Mammary epithelial cell (primary cell): ENCODE measurements at regions of chr2 and their contacts with region 1.

Region 1: GRCh38 chr2:216877084-216877483 is 17.2 kb upstream of the TNP1 start:
- DNase-seq: no peak
- H3K4me3 ChIP-seq: no peak overlapping the region
- H3K27ac ChIP-seq: no peak overlapping the region
- H3K4me1 ChIP-seq: no peaks in the 10 kb centered on the region
- H3K27me3 ChIP-seq: no peaks in the 10 kb centered on the region
- CTCF ChIP-seq: peak; percentile 37 to 55

Region 2: DNA sequence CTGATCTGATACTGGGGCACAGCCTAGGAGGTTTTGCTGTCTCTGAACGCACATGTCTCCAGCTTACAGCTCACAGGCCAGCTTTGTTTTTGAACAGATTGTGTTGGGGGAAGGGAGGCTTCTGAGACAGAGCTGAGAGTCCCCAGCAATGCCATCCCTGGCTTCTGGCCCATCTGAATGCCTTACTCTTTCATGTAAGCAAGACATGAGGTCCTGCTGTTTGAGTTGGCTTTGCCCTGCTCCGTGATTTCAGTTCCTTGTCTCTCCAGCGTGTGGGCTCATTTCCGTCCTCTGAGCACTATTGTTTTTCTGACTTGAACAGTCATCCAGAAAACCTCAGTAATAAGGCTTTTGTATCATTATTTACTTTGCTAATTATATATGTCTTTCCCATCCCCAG is 177.7 kb after region 1 on chr2:
- CTCF ChIA-PET with region 1: no interaction called
- dilution Hi-C with region 1: no loop called
- in situ Hi-C with region 1: no loop called
- intact Hi-C with region 1: loop called (anchors 5 kb)
- DNase-seq: no peak
- H3K4me3 ChIP-seq: no peak overlapping the region
- H3K27ac ChIP-seq: no peak overlapping the region
- H3K4me1 ChIP-seq: no peaks in the 10 kb centered on the region
- H3K27me3 ChIP-seq: no peaks in the 10 kb centered on the region
- CTCF ChIP-seq: no peak

Region 3: GRCh38 chr2:217142649-217143266 is 265.7 kb after region 1 on chr2:
- CTCF ChIA-PET with region 1: no interaction called
- dilution Hi-C with region 1: no loop called
- in situ Hi-C with region 1: no loop called
- intact Hi-C with region 1: loop called (anchors 1 kb)
- DNase-seq: peak; percentile 17
- H3K4me3 ChIP-seq: no peak overlapping the region
- H3K27ac ChIP-seq: no peak overlapping the region
- H3K4me1 ChIP-seq: no peaks in the 10 kb centered on the region
- H3K27me3 ChIP-seq: no peaks in the 10 kb centered on the region
- CTCF ChIP-seq: peak; percentile 78 to 81

Region 4: DNA sequence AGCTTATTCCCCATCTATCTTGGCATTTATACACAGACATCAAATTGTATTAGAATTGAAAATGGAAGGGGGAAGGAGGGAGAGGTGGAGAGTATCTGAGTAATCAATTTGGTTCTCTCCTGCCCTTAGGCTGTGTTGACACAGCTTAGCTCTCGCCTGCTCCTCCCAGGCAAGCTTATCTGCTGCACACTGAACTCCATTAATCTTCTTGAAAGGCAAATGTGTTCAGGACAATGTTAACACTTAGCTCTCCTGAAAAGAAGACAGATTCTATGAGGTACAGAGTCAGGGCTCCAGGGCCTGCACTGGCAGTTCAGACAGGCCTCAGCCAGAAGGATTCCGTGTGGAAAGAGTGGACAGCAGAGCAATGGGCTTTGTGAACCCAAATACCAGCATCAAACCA is 412.8 kb after region 1 on chr2:
- CTCF ChIA-PET with region 1: no interaction called
- dilution Hi-C with region 1: loop called (anchors 10 kb)
- in situ Hi-C with region 1: no loop called
- intact Hi-C with region 1: no loop called
- DNase-seq: peak; percentile 70
- H3K4me3 ChIP-seq: no peak overlapping the region
- H3K27ac ChIP-seq: no peak overlapping the region
- H3K4me1 ChIP-seq: peaks cover 11% of the 10 kb centered on the region
- H3K27me3 ChIP-seq: no peaks in the 10 kb centered on the region
- CTCF ChIP-seq: no peak

Region 5: DNA sequence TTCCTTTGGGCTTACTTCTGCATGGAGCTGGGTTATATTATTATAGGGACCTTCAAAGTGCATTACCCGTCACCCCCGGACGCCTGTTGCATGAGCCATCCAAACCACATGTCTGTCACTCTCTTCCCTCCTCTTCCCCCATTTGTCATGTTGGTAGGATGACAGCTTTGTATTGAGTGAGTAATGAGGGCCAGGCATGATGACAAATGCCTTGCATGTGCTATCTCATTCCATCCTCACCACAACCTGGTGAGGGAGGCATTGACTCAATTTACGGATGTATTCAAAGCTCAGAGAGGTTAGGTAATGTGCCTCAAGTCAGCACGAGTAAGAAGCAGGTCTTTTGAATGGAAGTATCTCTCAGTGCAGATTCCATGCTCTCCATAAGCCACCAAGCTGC is 493.3 kb after region 1 on chr2:
- CTCF ChIA-PET with region 1: no interaction called
- dilution Hi-C with region 1: no loop called
- in situ Hi-C with region 1: no loop called
- intact Hi-C with region 1: loop called (anchors 10 kb)
- DNase-seq: peak; percentile 96
- H3K4me3 ChIP-seq: no peak overlapping the region
- H3K27ac ChIP-seq: no peak overlapping the region
- H3K4me1 ChIP-seq: peaks cover 37% of the 10 kb centered on the region
- H3K27me3 ChIP-seq: no peaks in the 10 kb centered on the region
- CTCF ChIP-seq: peak; percentile 16 to 51